ENCODE measurements at regions of chr6 and their contacts with region 1.

Region 1: DNA sequence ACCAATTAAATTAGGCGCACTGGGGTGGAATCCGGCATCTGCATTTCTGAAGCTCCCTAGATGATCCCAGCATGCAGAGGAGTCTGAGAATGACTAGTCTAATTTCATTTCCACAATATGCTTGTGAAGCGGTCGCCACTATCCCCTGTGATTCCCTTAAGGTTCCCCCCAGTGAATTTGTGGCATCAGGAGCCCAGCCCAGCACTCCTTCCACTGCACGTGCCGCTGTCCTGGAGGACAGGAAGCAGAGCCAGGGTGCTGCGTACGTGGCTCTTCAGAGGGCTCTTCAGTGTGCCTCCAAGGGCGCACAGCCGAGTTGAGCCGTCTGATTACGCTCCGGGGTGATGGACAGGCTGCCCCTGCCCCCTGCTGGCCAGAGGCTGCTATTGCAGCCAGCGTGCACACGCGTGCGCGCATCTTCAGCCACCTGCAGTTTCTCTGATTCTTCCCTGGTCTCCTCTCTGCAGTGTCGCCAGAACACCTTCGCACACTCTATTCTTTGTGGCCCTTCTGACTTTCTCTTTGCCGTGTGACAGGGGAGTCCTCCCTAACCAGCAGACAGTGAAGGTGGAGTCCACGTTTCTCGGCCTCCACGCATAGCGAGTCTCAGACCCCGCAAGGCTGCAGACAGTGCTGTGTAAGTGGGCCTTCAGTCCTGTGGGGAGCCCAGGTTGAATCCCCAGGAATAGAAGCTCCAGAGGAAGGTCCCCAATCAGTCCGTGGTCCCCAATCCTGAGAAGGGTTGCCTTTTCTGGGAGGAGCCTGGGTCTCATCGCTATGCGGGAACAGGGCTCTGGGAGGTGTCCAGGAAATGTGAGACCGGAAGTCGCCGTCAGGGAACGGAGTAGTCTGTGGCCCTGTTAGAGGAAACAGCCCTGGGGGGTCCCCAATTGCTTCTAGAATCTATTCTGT is 16.5 kb upstream of the NCR2 start:
- DNase-seq: peak; percentile 63
- H3K4me3 ChIP-seq: peak overlapping the region in 2 of 3 experiments; percentile 19 to 32
- H3K27ac ChIP-seq: no peak overlapping the region
- H3K4me1 ChIP-seq: no peaks in the 10 kb centered on the region
- H3K27me3 ChIP-seq: no peaks in the 10 kb centered on the region
- CTCF ChIP-seq: peak; percentile 99

Region 2: GRCh38 chr6:40894962-40895799 is 423.7 kb before region 1 on chr6:
- CTCF ChIA-PET with region 1: no interaction called
- dilution Hi-C with region 1: no loop called
- in situ Hi-C with region 1: no loop called
- intact Hi-C with region 1: loop called (anchors 5 kb)
- DNase-seq: peak; percentile 23
- H3K4me3 ChIP-seq: no peak overlapping the region
- H3K27ac ChIP-seq: no peak overlapping the region
- H3K4me1 ChIP-seq: no peaks in the 10 kb centered on the region
- H3K27me3 ChIP-seq: no peaks in the 10 kb centered on the region
- CTCF ChIP-seq: peak; percentile 32 to 69

Region 3: GRCh38 chr6:41072676-41073623 is 246.0 kb before region 1 on chr6 and contains the start of gene NFYA:
- CTCF ChIA-PET with region 1: no interaction called
- dilution Hi-C with region 1: loop called (anchors 25 kb)
- in situ Hi-C with region 1: loop called in 1 of 2 experiments (anchors 25 kb)
- intact Hi-C with region 1: loop called (anchors 2 kb)
- DNase-seq: peak; percentile 99
- H3K4me3 ChIP-seq: peak within 1 kb of the TSS; percentile 90 to 92 (median 91)
- H3K27ac ChIP-seq: peak within 1 kb of the TSS; percentile 93
- H3K4me1 ChIP-seq: peaks cover 28% of the 10 kb centered on the region
- H3K27me3 ChIP-seq: no peaks in the 10 kb centered on the region
- CTCF ChIP-seq: peak in 1 of 2 donors; percentile 25
- total RNA-seq, gene NFYA: 18.5 to 29.1 TPM

Region 4: GRCh38 chr6:41182069-41183034 is 136.6 kb before region 1 on chr6:
- CTCF ChIA-PET with region 1: interaction called, 6 read pairs
- dilution Hi-C with region 1: no loop called
- in situ Hi-C with region 1: no loop called
- intact Hi-C with region 1: loop called (anchors 2 kb)
- DNase-seq: peak; percentile 70
- H3K4me3 ChIP-seq: no peak overlapping the region
- H3K27ac ChIP-seq: no peak overlapping the region
- H3K4me1 ChIP-seq: peaks cover 12% of the 10 kb centered on the region
- H3K27me3 ChIP-seq: no peaks in the 10 kb centered on the region
- CTCF ChIP-seq: peak; percentile 90 to 97

Region 5: GRCh38 chr6:41268478-41268877 is 50.4 kb before region 1 on chr6:
- CTCF ChIA-PET with region 1: no interaction called
- dilution Hi-C with region 1: no loop called
- in situ Hi-C with region 1: no loop called
- intact Hi-C with region 1: no loop called
- DNase-seq: no peak
- H3K4me3 ChIP-seq: no peak overlapping the region
- H3K27ac ChIP-seq: no peak overlapping the region
- H3K4me1 ChIP-seq: no peaks in the 10 kb centered on the region
- H3K27me3 ChIP-seq: no peaks in the 10 kb centered on the region
- CTCF ChIP-seq: no peak

Region 6: GRCh38 chr6:41278699-41279405 is 40.1 kb before region 1 on chr6:
- CTCF ChIA-PET with region 1: interaction called, 20 read pairs
- dilution Hi-C with region 1: no loop called
- in situ Hi-C with region 1: no loop called
- intact Hi-C with region 1: loop called (anchors 1 kb)
- DNase-seq: peak; percentile 37
- H3K4me3 ChIP-seq: no peak overlapping the region
- H3K27ac ChIP-seq: no peak overlapping the region
- H3K4me1 ChIP-seq: no peaks in the 10 kb centered on the region
- H3K27me3 ChIP-seq: no peaks in the 10 kb centered on the region
- CTCF ChIP-seq: peak; percentile 33 to 54

Measured in mammary epithelial cell (primary cell).